Ascending aorta (tissue), 2 donors: ENCODE measurements at regions of chr11 and their contacts with region 1.

Region 1: DNA sequence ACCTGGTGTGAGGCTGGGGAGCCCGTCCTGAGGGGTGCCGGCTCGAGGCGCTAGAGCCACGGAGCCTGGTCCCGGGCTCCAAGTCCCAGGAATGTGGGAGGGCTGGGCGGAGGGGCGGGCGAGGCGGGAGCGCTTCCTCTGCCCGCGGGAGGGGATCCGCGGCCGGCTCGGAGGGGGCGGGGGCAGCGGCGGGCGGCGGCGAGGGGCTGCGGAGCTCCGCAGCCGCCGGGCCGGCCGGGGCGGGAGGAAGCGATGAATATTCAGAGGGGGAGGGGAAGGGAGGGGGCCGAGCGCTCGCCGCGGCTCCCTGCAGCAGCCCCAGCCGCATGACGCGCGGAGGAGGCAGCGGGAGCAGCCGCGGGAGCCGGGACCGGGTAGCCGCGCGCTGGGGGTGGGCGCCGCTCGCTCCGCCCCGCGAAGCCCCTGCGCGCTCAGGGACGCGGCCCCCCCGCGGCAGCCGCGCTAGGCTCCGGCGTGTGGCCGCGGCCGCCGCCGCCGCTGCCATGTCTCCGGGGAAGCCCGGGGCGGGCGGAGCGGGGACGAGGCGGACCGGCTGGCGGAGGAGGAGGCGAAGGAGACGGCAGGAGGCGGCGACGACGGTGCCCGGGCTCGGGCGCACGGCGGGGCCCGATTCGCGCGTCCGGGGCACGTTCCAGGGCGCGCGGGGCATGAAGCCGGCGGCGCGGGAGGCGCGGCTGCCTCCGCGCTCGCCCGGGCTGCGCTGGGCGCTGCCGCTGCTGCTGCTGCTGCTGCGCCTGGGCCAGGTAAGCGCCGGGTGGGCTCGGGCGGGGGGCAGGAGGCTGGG is at the start of gene PTPRJ:
- DNase-seq: peak in 1 of 2 donors; percentile 79
- H3K4me3 ChIP-seq: peak within 1 kb of the TSS; percentile 87
- H3K27ac ChIP-seq: peak within 1 kb of the TSS; percentile 90 to 92
- H3K4me1 ChIP-seq: peaks cover 0 to 14% of the 10 kb centered on the region in 2 donors
- H3K27me3 ChIP-seq: no peaks in the 10 kb centered on the region
- CTCF ChIP-seq: no peak
- total RNA-seq, gene PTPRJ: 5.9 TPM

Region 2: DNA sequence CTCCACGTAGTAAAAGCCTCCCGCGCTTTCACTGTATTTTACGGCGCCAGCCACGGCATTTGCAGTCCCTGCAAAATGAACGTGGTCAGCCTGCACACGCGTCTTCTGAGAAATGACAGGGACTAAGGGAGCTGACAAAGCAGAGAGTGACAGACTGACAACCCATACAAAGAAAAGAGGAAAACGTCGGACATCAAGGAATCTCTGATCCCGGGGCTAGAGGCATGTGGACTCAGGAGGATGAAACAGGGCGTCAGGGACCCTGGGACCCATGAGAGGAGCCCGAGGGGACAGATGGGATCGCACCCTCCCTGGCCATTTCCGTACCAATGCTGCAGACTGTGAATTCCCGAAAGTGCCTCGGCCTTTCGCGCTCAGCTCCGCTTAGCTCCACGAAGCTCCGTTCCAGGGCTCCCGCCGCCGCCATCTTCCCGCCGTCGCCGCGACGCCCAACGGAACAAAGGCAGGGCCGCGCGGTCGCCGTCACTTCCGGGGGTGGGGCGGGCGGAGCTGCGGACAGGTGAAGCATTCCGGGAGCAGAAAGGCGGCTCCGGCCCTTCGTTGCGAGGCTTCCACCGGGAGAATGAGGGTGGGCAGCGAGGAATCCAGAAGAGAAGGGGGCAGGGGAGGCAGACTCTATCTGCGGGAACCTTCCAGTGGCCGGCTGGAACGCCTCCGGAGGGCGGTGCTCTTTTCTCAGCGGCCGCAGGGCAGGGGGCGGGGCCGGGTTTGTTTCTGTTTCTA is 132.4 kb before region 1 on chr11 and contains the start of gene NUP160:
- intact Hi-C with region 1: loop called (anchors 5 kb)
- DNase-seq: peak; percentile 32 to 92
- H3K4me3 ChIP-seq: peak within 1 kb of the TSS; percentile 80 to 91
- H3K27ac ChIP-seq: peak within 1 kb of the TSS; percentile 87 to 96
- H3K4me1 ChIP-seq: peaks cover 4 to 11% of the 10 kb centered on the region in 2 donors
- H3K27me3 ChIP-seq: no peaks in the 10 kb centered on the region
- CTCF ChIP-seq: no peak
- total RNA-seq, gene NUP160: 14.0 TPM

Region 3: DNA sequence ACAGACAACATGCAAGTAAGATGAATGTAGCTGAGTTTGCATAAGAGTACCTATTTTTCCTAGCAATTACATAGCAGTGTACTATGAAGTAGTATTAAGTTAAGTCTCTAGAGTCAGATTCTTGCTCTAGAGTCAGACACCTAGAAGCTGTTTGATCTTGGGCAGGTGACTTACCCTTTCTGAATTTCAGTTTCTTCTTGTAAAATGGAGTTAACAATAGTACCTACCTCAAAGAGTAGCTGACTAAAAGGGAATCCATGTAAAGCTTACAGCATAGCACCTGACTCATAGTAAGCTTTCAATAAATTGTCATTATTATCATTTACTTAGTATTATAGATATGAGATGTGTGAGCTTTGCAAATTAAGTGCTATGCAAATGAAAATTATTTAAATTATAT is 47.9 kb before region 1 on chr11:
- intact Hi-C with region 1: loop called (anchors 2 kb)
- DNase-seq: no peak
- H3K4me3 ChIP-seq: no peak overlapping the region
- H3K27ac ChIP-seq: peak overlapping the region in 1 of 2 donors; percentile 56
- H3K4me1 ChIP-seq: no peaks in the 10 kb centered on the region
- H3K27me3 ChIP-seq: no peaks in the 10 kb centered on the region
- CTCF ChIP-seq: no peak

Region 4: DNA sequence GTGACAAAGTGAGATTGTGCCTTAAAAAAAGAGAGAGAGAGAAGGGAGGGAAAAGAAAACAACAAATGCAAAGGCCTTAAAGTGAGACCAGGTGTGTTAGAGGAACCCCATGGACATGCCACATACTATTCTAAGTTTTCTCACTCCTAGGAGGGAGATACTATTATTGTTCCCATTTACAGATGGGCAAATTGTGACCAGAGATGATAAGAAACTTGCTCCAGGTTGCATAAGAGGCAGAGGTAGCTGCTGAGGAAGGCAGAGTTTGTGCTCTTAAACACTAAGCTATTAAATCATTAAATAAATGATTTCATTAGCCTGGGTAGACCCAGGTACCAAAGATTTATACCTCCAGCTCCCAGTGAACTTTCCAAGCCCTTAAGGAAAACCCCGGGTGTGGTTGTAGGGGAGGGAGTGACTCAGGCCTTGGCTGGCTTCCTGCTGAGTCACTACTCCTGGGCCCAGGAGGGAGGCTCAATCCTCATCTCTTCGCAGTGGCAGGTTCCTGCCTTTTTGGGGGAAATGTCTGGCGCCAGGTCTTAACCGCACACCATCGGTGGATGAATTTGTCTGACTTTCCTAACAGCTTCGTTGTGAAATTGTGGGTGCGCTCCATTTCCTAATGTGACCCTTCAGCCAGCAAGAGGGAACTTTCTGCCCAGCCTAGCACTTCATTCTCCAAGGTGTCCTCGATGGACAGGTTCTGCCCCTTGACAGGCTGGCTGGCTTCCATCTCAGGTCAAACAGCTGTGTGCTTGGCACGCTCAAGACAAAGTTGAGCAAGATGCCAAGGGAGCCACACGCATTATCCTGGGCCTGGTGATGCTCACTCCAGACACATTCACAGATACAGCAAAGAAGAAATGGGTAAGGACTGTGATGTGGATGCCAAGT is 33.5 kb before region 1 on chr11:
- intact Hi-C with region 1: loop called (anchors 2 kb)
- DNase-seq: peak; percentile 50 to 91
- H3K4me3 ChIP-seq: no peak overlapping the region
- H3K27ac ChIP-seq: peak overlapping the region in 1 of 2 donors; percentile 6
- H3K4me1 ChIP-seq: no peaks in the 10 kb centered on the region
- H3K27me3 ChIP-seq: no peaks in the 10 kb centered on the region
- CTCF ChIP-seq: no peak

Region 5: GRCh38 chr11:48063424-48063978 is 83.1 kb after region 1 on chr11:
- intact Hi-C with region 1: loop called (anchors 5 kb)
- DNase-seq: peak in 1 of 2 donors; percentile 69
- H3K4me3 ChIP-seq: no peak overlapping the region
- H3K27ac ChIP-seq: peak overlapping the region; percentile 67 to 71
- H3K4me1 ChIP-seq: peaks cover 10 to 20% of the 10 kb centered on the region in 2 donors
- H3K27me3 ChIP-seq: no peaks in the 10 kb centered on the region
- CTCF ChIP-seq: no peak

Region 6: DNA sequence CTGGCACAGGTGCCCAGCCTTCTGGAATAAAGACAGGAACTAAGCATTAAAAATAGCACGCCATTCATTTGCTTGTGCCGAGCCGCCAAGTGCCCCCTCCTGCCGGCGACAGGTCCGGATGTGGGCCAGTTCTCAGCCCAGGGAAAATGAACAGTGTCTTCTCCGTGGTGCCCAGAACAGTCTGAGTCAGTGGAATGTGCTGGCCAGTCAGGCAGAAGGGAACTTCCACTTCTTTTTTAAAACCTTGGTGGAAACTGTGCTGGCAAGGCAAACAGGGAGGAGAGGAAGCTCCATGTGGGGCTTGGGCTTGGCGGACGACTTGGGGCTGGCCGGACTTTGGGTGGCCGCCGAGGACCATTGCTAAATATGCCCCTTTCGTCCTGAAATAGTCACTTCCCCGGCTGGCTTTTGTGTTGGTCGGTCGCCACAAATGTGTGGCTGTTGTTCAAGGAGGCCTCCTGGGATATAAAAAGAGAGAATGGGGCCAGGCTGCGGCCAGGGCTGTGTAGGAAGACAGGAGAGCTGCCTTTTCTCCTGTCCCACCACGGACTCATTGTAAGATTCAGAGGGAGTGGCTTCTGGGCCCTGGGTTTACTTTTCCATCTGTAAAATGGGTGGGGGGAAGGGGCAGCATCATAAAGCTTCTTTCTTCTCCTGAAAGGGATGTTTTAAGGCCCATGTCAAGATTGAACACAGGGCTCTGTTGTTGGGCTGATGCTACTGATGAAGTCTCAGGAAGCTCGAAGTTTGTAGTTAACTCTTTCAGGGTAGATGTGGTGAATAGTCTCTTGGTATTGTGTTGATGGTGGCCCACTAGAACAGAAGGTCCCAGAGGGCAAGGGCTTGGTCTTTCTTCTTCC is 100.9 kb after region 1 on chr11:
- intact Hi-C with region 1: loop called (anchors 2 kb)
- DNase-seq: peak; percentile 74 to 95
- H3K4me3 ChIP-seq: no peak overlapping the region
- H3K27ac ChIP-seq: peak overlapping the region; percentile 64 to 78
- H3K4me1 ChIP-seq: peaks cover 0 to 15% of the 10 kb centered on the region in 2 donors
- H3K27me3 ChIP-seq: no peaks in the 10 kb centered on the region
- CTCF ChIP-seq: no peak